ENCODE measurements at regions of chr15 and their contacts with region 1.

Region 1: GRCh38 chr15:43225201-43225949 is 4.6 kb upstream of the EPB42 start:
- DNase-seq: peak; percentile 79
- CTCF ChIP-seq: peak; percentile 72

Region 2: DNA sequence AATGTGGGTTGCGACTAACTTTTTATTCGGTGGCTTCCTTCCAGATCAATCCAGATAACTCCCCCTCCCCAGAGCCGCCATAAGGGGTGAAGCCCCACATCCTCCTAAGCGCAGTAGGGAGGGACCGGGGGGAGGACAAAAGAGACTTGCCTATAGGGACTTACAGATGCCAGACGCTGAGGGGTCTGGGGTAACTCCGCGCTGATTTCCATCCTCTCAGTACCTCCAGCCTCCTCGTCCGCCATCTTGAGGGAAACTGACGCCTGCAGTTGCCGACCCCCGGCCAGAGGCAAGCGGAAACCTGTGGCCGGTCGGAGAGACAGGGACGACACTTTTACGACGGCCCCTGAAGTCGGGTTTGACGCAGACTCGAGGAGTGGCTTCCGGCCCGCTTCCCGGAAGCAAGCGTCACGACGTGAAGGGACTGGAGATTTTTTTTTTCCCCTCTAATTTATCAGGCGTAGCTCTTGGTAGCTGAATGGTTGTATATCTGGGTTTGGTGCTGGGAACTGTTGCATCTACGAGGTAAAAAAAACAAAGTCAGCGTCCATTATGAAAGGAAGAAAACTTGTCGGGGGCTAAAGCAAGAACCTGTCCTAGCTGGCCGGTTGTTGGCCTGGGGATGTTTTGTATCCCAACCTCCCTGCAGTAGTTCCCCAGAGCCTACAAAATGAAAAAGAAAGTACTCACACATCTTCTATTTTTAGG is 119.4 kb before region 1 on chr15 and contains the start of gene UBR1:
- CTCF ChIA-PET with region 1: no interaction called
- POLR2A ChIA-PET with region 1: no interaction called
- DNase-seq: peak; percentile 91
- CTCF ChIP-seq: no peak

Region 3: DNA sequence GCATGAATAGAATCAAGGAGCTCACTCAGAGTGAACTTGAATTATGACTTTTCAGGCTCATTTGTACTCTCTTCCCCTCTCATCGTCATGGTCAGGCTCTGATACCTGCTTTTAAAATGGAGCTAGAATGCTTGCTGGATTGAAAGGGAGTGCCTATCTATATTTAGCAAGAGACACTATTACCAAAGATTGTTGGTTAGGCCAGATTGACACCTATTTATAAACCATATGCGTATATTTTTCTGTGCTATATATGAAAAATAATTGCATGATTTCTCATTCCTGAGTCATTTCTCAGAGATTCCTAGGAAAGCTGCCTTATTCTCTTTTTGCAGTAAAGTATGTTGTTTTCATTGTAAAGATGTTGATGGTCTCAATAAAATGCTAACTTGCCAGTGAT is 30.6 kb before region 1 on chr15:
- CTCF ChIA-PET with region 1: interaction called, 11 read pairs
- POLR2A ChIA-PET with region 1: no interaction called
- DNase-seq: no peak
- CTCF ChIP-seq: no peak

Region 4: GRCh38 chr15:43241100-43241499 is 15.7 kb after region 1 on chr15:
- CTCF ChIA-PET with region 1: interaction called, 72 read pairs
- POLR2A ChIA-PET with region 1: no interaction called
- DNase-seq: no peak
- CTCF ChIP-seq: no peak

Region 5: GRCh38 chr15:43253431-43254403 is 28.3 kb after region 1 on chr15:
- CTCF ChIA-PET with region 1: interaction called, 48 read pairs
- POLR2A ChIA-PET with region 1: no interaction called
- DNase-seq: peak; percentile 64
- CTCF ChIP-seq: no peak

Region 6: GRCh38 chr15:43268111-43269105 is 43.0 kb after region 1 on chr15:
- CTCF ChIA-PET with region 1: interaction called, 250 read pairs
- POLR2A ChIA-PET with region 1: interaction called, 4 read pairs
- DNase-seq: peak; percentile 57
- CTCF ChIP-seq: peak; percentile 59

Region 7: DNA sequence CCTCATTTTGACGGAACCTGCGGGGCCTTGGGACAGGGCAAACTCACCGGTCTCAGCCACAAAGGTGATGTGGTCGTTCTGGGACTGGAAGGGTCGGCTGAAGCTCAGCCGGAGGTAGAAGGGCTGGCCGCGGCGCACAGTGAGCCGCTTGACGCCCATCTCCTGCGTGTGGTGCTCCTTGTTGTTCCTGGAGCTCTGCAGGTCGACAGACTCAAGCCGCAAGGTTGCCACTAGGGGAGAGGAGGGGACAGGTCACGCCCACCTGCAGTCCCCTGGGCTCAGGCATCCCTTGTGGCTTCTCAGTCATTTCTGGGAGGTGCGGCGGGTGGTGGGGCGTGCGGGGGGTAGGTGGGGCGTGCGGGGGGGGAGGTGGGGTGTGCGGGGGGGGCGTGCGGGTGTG is 68.0 kb after region 1 on chr15:
- CTCF ChIA-PET with region 1: interaction called, 326 read pairs
- POLR2A ChIA-PET with region 1: no interaction called
- DNase-seq: no peak
- CTCF ChIP-seq: no peak